Caco-2 (cell line): ENCODE measurements at regions of chr14 and their contacts with region 1.

Region 1: DNA sequence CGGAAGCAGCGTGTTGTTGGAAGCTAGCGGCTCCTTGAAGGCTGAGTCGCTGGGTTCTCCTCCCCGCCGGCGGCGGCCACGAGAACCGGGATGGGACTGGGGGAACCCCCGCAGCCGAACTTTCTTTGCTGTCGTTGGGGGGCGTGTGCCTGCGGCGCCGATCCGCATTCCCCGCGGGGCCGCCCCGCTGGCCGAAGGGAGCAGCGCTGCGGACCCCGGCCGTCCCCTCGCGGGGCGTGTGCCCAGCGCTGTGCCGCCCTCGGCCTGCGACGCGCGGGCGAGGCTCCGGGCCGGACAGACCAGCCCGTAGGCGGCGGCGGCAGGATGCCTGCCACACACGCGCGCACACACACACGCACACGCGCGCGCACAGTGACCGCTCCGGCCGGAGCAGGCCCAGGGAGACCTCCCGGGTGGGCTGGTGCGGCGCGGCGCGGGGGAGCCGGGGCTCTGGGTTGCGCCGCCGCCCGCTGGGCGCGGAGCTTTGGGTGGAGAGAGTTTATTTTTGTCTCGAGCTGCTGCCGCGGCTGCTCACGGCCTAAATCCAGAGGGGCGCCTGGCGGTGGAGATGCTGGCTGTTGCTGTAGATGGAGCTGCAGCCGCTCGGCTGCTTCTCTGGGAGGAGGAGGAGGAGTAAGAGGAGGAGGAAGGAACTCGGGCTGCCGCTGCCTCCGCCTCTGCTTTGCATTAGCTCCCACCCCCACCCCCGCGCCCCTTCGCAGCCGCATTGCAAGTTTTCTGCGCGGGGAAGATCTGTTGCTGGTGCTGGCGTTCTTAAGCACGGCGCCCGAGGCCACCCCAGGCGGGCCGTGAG is at the start of gene SAMD4A:
- DNase-seq: peak; percentile 72 to 83
- H3K4me3 ChIP-seq: peak within 1 kb of the TSS; percentile 73
- H3K4me3 Mint-ChIP-seq: peak within 1 kb of the TSS; percentile 95
- H3K27ac Mint-ChIP-seq: peak within 1 kb of the TSS; percentile 98
- H3K4me1 ChIP-seq: peaks cover 24% of the 10 kb centered on the region
- H3K4me1 Mint-ChIP-seq: peaks cover 8% of the 10 kb centered on the region
- H3K27me3 ChIP-seq: no peaks in the 10 kb centered on the region
- H3K27me3 Mint-ChIP-seq: no peaks in the 10 kb centered on the region
- CTCF ChIP-seq: peak in 1 of 2 experiments; percentile 14
- total RNA-seq, gene SAMD4A: 60.4 and 60.8 TPM in 2 replicates

Region 2: GRCh38 chr14:54509546-54510501 is 56.8 kb before region 1 on chr14 and contains the start of gene CGRRF1:
- CTCF ChIA-PET with region 1: interaction called, 10 read pairs
- POLR2A ChIA-PET with region 1: interaction called, 13 read pairs
- intact Hi-C with region 1: loop called (anchors 2 kb)
- DNase-seq: peak; percentile 98 to 99
- H3K4me3 ChIP-seq: peak within 1 kb of the TSS; percentile 57
- H3K4me3 Mint-ChIP-seq: peak within 1 kb of the TSS; percentile 96
- H3K27ac Mint-ChIP-seq: peak within 1 kb of the TSS; percentile 92
- H3K4me1 ChIP-seq: no peaks in the 10 kb centered on the region
- H3K4me1 Mint-ChIP-seq: peaks cover 8% of the 10 kb centered on the region
- H3K27me3 ChIP-seq: no peaks in the 10 kb centered on the region
- H3K27me3 Mint-ChIP-seq: peaks cover 2% of the 10 kb centered on the region
- CTCF ChIP-seq: peak; percentile 58 to 78
- total RNA-seq, gene CGRRF1: 12.0 and 12.3 TPM in 2 replicates

Region 3: GRCh38 chr14:54652188-54652587 is 85.6 kb after region 1 on chr14:
- CTCF ChIA-PET with region 1: interaction called, 4 read pairs
- POLR2A ChIA-PET with region 1: interaction called, 14 read pairs
- intact Hi-C with region 1: no loop called
- DNase-seq: peak; percentile 76 to 85
- H3K4me3 ChIP-seq: 0 out of 2 replicates have a peak overlapping the region, but pooled peaks have one; percentile 4
- H3K4me3 Mint-ChIP-seq: peak overlapping the region; percentile 52
- H3K27ac Mint-ChIP-seq: peak overlapping the region; percentile 66
- H3K4me1 ChIP-seq: peaks cover 96% of the 10 kb centered on the region
- H3K4me1 Mint-ChIP-seq: peaks cover 44% of the 10 kb centered on the region
- H3K27me3 ChIP-seq: no peaks in the 10 kb centered on the region
- H3K27me3 Mint-ChIP-seq: no peaks in the 10 kb centered on the region
- CTCF ChIP-seq: no peak

Region 4: DNA sequence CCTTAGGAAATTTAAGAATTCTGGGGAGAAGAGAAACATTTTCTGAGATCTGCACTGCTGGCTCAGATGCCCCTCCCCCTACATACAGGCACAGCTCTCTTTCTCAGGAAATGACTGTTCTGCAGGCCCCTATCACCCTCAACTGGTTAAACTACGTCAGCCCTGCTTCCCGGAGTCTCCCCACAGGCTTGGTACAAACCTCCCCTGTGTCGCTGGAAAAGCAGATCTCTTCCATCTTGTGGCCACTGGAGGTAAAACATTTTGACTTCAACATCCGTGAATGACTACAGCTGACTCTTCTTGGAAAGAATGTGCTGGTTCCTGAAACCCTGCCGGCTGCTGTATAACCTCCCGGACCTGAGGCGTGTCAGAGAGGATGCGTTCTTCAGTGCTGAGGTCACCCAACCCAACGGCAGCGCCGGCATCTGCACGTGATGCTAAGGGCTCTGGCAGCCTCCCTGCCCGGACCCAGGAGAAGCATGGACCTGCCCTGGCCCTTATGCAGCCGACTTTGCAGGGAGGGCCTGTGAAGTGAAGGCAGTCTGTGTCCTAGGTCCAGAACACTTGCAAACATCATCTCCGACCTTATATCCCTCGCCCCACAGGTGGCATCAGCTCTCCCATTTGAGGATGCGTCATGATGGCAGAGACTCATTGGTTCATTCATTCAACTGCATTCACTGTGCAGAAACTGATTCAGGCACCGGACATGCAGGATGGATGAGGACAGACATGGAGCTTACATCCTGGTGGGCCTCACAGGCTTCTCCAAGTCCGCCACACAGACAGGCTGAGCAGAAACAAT is 206.8 kb after region 1 on chr14:
- CTCF ChIA-PET with region 1: interaction called, 31 read pairs
- POLR2A ChIA-PET with region 1: interaction called, 3 read pairs
- intact Hi-C with region 1: loop called (anchors 1 kb)
- DNase-seq: peak; percentile 72 to 81
- H3K4me3 ChIP-seq: no peak overlapping the region
- H3K4me3 Mint-ChIP-seq: peak overlapping the region; percentile 12
- H3K27ac Mint-ChIP-seq: peak overlapping the region; percentile 30
- H3K4me1 ChIP-seq: peaks cover 5% of the 10 kb centered on the region; the same call in 1 of the 2 replicates
- H3K4me1 Mint-ChIP-seq: peaks cover 12% of the 10 kb centered on the region
- H3K27me3 ChIP-seq: no peaks in the 10 kb centered on the region
- H3K27me3 Mint-ChIP-seq: no peaks in the 10 kb centered on the region
- CTCF ChIP-seq: peak; percentile 18 to 54

Region 5: DNA sequence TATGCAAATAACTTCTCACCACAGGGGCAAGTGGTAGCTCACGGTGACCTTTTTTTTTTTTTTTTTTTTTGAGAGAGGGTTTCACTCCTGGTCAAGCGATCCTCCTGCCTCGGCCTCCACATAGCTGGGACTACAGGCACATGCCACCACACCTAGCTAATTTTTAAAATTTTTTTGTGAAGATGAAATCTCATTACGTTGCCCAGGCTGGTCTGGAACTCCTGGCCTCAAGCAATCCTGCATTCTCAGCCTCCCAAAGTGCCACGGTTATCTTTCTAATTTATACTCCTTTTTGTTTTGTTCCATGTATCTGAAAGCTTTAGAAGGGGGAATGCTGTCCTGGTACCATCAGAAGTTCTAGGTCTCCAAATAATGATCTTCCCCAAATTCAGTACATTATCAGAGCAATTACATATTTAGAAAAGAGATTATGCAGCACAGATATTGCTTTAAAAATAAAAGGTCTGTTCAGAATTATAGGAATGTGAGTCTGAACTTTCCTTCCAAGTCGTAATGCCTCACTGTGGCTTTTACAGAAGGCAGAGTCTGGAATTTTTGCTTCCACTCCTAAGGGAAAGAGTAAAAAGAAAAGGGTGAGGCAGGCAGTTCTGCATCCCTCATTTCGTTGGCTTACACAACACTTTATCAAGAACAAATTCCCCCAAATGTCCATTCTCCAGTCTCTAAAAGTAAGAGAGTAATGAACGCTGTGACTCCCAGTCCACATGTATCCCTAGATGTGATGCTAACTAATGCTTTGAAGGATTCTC is 263.0 kb after region 1 on chr14:
- CTCF ChIA-PET with region 1: interaction called, 9 read pairs
- POLR2A ChIA-PET with region 1: interaction called, 11 read pairs
- intact Hi-C with region 1: no loop called
- DNase-seq: no peak
- H3K4me3 ChIP-seq: no peak overlapping the region
- H3K4me3 Mint-ChIP-seq: no peak overlapping the region
- H3K27ac Mint-ChIP-seq: no peak overlapping the region
- H3K4me1 ChIP-seq: no peaks in the 10 kb centered on the region
- H3K4me1 Mint-ChIP-seq: no peaks in the 10 kb centered on the region
- H3K27me3 ChIP-seq: no peaks in the 10 kb centered on the region
- H3K27me3 Mint-ChIP-seq: no peaks in the 10 kb centered on the region
- CTCF ChIP-seq: no peak